Esophagus muscularis mucosa (tissue), 4 donors: ENCODE measurements at regions of chr9 and their contacts with region 1.

Region 1: GRCh38 chr9:763692-764524 is 77.6 kb upstream of the DMRT1 start:
- DNase-seq: no peak
- H3K4me3 ChIP-seq: peak overlapping the region; percentile 12 to 44 (median 30)
- H3K27ac ChIP-seq: no peak overlapping the region
- H3K4me1 ChIP-seq: peaks cover 0 to 9% (median 4%) of the 10 kb centered on the region in 4 donors
- H3K27me3 ChIP-seq: peaks cover 0 to 9% (median 0%) of the 10 kb centered on the region in 4 donors
- CTCF ChIP-seq: peak; percentile 93 to 97 (median 94)
- EP300 ChIP-seq: no peak
- POLR2A ChIP-seq: no peak

Region 2: DNA sequence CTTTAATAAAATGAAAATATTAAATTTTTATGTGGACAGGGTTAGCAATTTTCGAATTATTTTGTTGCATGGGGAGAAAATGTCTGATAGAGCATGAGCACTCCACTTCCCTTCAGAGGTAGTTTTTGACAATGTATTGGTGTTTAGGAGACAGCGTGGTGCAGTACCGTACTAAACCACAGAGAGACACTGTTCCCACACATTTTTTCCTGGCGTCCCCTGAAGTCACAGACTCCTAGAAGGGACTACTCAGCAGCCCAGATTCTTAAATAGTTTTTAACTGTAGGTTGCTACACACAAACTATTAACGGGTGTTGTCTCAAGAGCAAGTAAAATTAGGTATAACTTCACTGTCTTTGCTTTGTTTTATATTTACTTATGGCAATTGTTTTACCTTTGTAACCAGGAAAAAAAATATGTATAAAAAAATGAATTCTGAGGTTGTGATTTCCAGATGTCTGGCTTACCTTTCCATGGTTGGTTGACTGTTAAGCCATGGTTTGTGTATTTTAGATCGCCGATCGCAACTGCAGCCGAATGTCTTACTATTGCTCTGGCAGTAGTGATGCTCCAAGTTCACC is 378.0 kb before region 1 on chr9:
- intact Hi-C with region 1: loop called (anchors 10 kb)
- DNase-seq: no peak
- H3K4me3 ChIP-seq: no peak overlapping the region
- H3K27ac ChIP-seq: no peak overlapping the region
- H3K4me1 ChIP-seq: no peaks in the 10 kb centered on the region
- H3K27me3 ChIP-seq: no peaks in the 10 kb centered on the region
- CTCF ChIP-seq: peak; percentile 57 to 80 (median 62)
- EP300 ChIP-seq: no peak
- POLR2A ChIP-seq: no peak

Region 3: DNA sequence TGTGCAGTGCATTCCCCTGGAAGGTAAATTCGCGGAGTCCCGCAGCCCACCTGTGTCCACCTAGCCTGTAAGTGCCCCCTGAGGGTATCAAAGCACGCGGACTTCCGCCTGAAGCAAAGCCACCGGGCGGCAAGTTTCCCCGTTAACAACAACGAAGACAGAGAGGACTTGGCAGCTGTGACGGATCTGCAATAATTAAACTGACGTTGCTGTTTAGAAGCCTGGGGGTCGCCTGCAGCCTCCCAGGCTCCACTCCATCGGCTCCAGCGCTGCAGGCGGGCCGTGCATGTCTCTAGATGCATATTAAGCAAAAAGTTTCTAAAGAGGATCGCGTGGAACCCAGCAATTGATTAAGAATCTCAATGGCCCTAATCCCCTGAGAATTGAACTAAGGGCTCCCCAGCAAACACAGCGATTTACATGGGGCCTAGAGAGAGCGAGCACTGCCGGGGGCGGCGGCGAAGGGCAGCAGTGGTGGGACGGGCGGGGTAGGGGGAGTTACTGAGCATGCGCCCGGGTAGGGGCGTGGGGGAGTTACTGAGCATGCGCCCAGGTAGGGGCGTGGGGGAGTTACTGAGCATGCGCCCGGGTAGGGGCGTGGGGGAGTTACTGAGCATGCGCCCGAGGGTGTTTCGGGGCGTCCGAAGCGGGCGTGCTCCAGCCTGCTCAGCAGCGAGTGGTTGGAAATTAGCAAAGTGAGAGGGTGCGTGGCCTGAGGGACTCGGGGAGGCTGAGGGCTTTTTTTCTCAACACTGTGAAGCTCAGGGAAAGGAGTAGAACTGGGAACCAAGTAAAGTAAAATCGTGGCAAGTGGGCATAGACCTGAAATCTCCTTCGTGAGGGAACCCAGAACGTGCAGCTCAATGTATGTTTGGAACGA is 294.0 kb before region 1 on chr9:
- intact Hi-C with region 1: loop called (anchors 10 kb)
- DNase-seq: peak; percentile 96
- H3K4me3 ChIP-seq: peak overlapping the region; percentile 62 to 73 (median 64)
- H3K27ac ChIP-seq: peak overlapping the region; percentile 58 to 83 (median 74)
- H3K4me1 ChIP-seq: peaks cover 10 to 25% (median 21%) of the 10 kb centered on the region in 4 donors
- H3K27me3 ChIP-seq: no peaks in the 10 kb centered on the region
- CTCF ChIP-seq: no peak
- EP300 ChIP-seq: no peak
- POLR2A ChIP-seq: no peak

Region 4: GRCh38 chr9:613771-614347 is 150.0 kb before region 1 on chr9:
- intact Hi-C with region 1: loop called (anchors 2 kb)
- DNase-seq: no peak
- H3K4me3 ChIP-seq: peak overlapping the region in 2 of 4 donors; percentile 4 to 9
- H3K27ac ChIP-seq: peak overlapping the region; percentile 56 to 69 (median 66)
- H3K4me1 ChIP-seq: peaks cover 26 to 39% (median 31%) of the 10 kb centered on the region in 4 donors
- H3K27me3 ChIP-seq: no peaks in the 10 kb centered on the region
- CTCF ChIP-seq: peak; percentile 85 to 94 (median 89)
- EP300 ChIP-seq: no peak
- POLR2A ChIP-seq: no peak

Region 5: DNA sequence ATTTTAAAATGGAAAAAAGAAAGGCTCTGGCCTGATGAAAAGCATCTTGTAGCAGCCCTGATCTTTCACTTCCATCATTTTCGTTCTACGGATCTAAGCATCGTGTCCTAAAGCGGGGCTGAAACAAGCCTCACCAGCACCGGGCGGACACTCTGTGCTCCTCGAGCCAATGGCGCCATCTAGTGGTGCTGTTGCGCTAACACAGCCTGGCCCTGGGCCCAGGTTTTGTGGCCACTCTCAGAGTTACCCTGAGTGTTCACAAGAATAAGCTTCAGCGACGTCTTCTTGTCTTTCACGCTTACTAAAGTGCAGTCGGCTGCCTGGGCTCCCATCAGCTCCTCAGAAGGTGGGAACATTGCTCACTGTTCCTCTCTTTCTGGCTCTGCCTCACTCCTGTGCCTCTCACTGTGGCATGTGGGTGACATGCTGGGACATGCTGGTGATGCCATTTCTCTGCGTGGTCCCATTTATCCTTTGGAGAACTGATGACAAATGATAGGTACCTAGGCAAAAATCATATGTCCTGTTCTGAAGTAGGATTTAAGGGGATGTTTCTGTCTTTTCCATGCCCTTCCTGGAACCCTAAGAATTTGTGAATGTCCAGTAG is 245.3 kb after region 1 on chr9:
- intact Hi-C with region 1: loop called (anchors 10 kb)
- DNase-seq: no peak
- H3K4me3 ChIP-seq: no peak overlapping the region
- H3K27ac ChIP-seq: no peak overlapping the region
- H3K4me1 ChIP-seq: peaks cover 0 to 5% (median 4%) of the 10 kb centered on the region in 4 donors
- H3K27me3 ChIP-seq: peaks cover 0 to 61% (median 0%) of the 10 kb centered on the region in 4 donors
- CTCF ChIP-seq: peak in 2 of 3 experiments; percentile 88 to 93
- EP300 ChIP-seq: no peak
- POLR2A ChIP-seq: no peak